Activated CD8-positive, alpha-beta T cell treated with anti-CD3 and anti-CD28 coated beads for 36 hours (primary cell): ENCODE measurements at regions of chr17 and their contacts with region 1.

Region 1: DNA sequence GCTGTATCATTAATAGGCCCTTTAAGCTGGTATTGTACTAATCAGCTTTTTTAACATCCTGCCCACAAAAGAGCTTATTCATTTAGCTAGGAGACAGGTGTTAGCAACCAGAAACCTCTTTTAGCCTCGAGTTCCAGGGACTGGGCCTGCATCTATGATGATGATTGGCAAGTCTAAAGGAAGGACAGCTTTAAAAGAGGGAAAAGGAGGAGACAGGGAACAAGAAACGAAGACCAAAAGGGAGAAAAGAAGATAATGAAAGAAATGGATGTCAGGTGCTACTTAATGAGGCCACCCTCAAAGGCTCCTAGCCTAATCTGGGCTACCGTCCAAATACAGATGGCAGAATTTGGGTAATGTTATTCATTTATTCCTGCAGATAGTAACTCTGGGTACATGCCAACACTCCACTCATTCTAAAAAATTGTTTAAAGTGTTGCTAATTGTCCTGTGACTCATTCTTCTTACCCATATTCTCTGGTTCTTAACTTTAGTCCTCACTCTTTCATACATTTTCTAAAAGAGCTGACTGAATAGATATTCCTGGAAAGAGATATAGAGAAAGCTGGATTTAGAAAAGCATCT is 18.7 kb upstream of the RFFL start:
- DNase-seq: peak; percentile 21
- ATAC-seq: peak; percentile 60
- H3K4me3 Mint-ChIP-seq: peak overlapping the region; percentile 11
- H3K27ac Mint-ChIP-seq: peak overlapping the region; percentile 88
- H3K4me1 Mint-ChIP-seq: peaks cover 72% of the 10 kb centered on the region
- H3K27me3 Mint-ChIP-seq: no peaks in the 10 kb centered on the region
- CTCF ChIP-seq: no peak

Region 2: DNA sequence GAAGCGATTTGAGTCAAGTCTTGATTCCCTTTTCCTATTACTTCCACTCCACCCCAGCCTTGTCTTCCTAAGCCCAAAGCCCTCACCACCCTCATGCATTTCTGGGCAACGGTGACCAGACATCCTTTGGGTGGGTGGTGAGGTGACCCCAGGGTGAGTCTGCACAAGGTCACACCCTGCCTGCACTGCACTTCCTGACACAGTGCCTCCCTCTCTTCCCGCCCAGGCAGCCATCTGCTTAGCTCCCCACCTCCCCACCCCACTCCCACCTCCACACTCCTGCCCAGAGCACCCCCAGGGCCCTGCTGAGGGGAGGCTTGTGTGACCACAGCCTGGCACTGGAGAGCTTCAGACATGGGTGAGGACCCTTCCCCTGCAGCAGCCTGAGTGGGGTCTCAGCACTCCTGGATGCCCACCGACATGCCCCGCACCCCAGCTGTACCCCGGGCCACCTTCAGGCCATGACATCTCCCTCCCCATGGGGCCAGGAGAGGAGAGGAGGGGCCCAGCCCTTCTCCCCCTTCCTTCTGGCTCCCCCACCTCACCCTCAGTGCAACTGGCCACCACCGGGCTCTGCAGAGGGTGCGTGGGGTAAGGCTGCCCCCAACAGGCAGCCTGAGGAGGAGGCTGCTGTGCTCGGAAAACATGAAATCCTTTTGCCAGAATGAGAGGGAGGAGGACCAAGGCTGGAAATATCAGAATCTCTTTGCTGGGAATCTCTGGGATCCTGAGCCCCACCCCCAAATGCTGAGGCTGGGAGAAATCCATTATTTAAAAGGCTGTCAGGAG is 189.5 kb before region 1 on chr17:
- CTCF ChIA-PET with region 1: no interaction called
- POLR2A ChIA-PET with region 1: no interaction called
- intact Hi-C with region 1: no loop called
- DNase-seq: peak; percentile 19
- ATAC-seq: no peak
- H3K4me3 Mint-ChIP-seq: no peak overlapping the region
- H3K27ac Mint-ChIP-seq: no peak overlapping the region
- H3K4me1 Mint-ChIP-seq: no peaks in the 10 kb centered on the region
- H3K27me3 Mint-ChIP-seq: peaks cover 19% of the 10 kb centered on the region
- CTCF ChIP-seq: no peak

Region 3: GRCh38 chr17:35069311-35069710 is 12.9 kb before region 1 on chr17:
- CTCF ChIA-PET with region 1: interaction called, 17 read pairs
- POLR2A ChIA-PET with region 1: interaction called, 12 read pairs
- intact Hi-C with region 1: no loop called
- DNase-seq: no peak
- ATAC-seq: no peak
- H3K4me3 Mint-ChIP-seq: no peak overlapping the region
- H3K27ac Mint-ChIP-seq: no peak overlapping the region
- H3K4me1 Mint-ChIP-seq: peaks cover 62% of the 10 kb centered on the region
- H3K27me3 Mint-ChIP-seq: no peaks in the 10 kb centered on the region
- CTCF ChIP-seq: no peak